IMR-90 (cell line): ENCODE measurements at regions of chr15 and their contacts with region 1.

Region 1: GRCh38 chr15:50145451-50145872 is 26.4 kb upstream of the ATP8B4 start:
- DNase-seq: peak; percentile 88
- ATAC-seq: peak; percentile 86
- H3K4me3 ChIP-seq: no peak overlapping the region
- H3K27ac ChIP-seq: peak overlapping the region; percentile 44
- H3K4me1 ChIP-seq: no peaks in the 10 kb centered on the region; the same call in 1 of the 2 replicates
- H3K27me3 ChIP-seq: no peaks in the 10 kb centered on the region
- CTCF ChIP-seq: peak; percentile 60
- POLR2A ChIP-seq: no peak
- RAD21 ChIP-seq: peak; percentile 83

Region 2: GRCh38 chr15:48645558-48646330 is 1499.7 kb before region 1 on chr15 and contains the start of gene FBN1:
- CTCF ChIA-PET with region 1: no interaction called
- POLR2A ChIA-PET with region 1: no interaction called
- dilution Hi-C with region 1: no loop called
- in situ Hi-C with region 1: no loop called
- intact Hi-C with region 1: loop called (anchors 10 kb)
- DNase-seq: peak; percentile 90
- ATAC-seq: peak; percentile 74
- H3K4me3 ChIP-seq: peak within 1 kb of the TSS; percentile 90
- H3K27ac ChIP-seq: peak within 1 kb of the TSS; percentile 89
- H3K4me1 ChIP-seq: peaks cover 6% of the 10 kb centered on the region
- H3K27me3 ChIP-seq: no peaks in the 10 kb centered on the region
- CTCF ChIP-seq: no peak
- POLR2A ChIP-seq: peak; percentile 96
- RAD21 ChIP-seq: peak; percentile 2; the same call in 1 of the 2 replicates
- total RNA-seq, gene FBN1: 283 and 326 TPM in 2 replicates

Region 3: DNA sequence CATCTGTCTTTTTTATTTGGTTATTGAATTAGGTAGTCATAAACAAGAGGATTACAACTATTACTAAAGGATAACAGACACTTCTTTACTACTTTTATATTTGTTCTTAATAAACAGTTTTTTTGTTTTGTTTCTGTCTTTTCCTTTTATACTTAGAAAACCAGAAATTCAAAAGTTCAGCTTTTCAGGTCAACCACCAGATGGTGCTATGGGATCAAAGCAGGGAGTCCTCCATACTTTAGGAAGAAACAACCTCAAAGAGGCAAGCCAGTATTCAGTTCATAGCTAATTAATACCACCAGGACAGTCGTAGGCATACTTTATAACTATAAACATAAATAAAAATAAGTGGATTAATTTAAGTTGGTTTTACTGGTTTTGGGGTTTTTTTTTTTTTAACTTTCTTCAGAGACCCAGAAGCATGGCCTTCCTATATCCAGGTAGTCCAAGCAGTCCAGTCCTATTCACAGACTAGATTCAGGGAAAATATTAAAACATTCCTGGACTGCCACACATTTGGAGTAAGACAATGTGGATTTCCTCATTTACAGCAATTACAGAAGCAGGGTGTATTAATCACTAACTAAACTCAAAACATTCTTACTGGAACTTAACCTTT is 1283.5 kb before region 1 on chr15:
- CTCF ChIA-PET with region 1: no interaction called
- POLR2A ChIA-PET with region 1: no interaction called
- dilution Hi-C with region 1: no loop called
- in situ Hi-C with region 1: loop called (anchors 10 kb)
- intact Hi-C with region 1: loop called (anchors 5 kb)
- DNase-seq: peak; percentile 82
- ATAC-seq: peak; percentile 28; the same call in 1 of the 2 replicates
- H3K4me3 ChIP-seq: no peak overlapping the region
- H3K27ac ChIP-seq: no peak overlapping the region
- H3K4me1 ChIP-seq: peaks cover 24% of the 10 kb centered on the region
- H3K27me3 ChIP-seq: no peaks in the 10 kb centered on the region
- CTCF ChIP-seq: peak; percentile 96
- POLR2A ChIP-seq: no peak
- RAD21 ChIP-seq: peak; percentile 99

Region 4: GRCh38 chr15:49242820-49243219 is 902.6 kb before region 1 on chr15:
- CTCF ChIA-PET with region 1: no interaction called
- POLR2A ChIA-PET with region 1: no interaction called
- dilution Hi-C with region 1: no loop called
- in situ Hi-C with region 1: loop called (anchors 5 kb)
- intact Hi-C with region 1: no loop called
- DNase-seq: peak; percentile 95
- ATAC-seq: peak; percentile 81
- H3K4me3 ChIP-seq: no peak overlapping the region
- H3K27ac ChIP-seq: peak overlapping the region; percentile 91
- H3K4me1 ChIP-seq: peaks cover 15% of the 10 kb centered on the region
- H3K27me3 ChIP-seq: no peaks in the 10 kb centered on the region
- CTCF ChIP-seq: no peak
- POLR2A ChIP-seq: no peak
- RAD21 ChIP-seq: no peak

Region 5: GRCh38 chr15:49927189-49927868 is 218.1 kb before region 1 on chr15:
- CTCF ChIA-PET with region 1: no interaction called
- POLR2A ChIA-PET with region 1: no interaction called
- dilution Hi-C with region 1: no loop called
- in situ Hi-C with region 1: no loop called
- intact Hi-C with region 1: no loop called
- DNase-seq: peak; percentile 62
- ATAC-seq: peak; percentile 51; the same call in 1 of the 2 replicates
- H3K4me3 ChIP-seq: no peak overlapping the region
- H3K27ac ChIP-seq: peak overlapping the region; percentile 53; the same call in 1 of the 2 replicates
- H3K4me1 ChIP-seq: peaks cover 4% of the 10 kb centered on the region
- H3K27me3 ChIP-seq: no peaks in the 10 kb centered on the region
- CTCF ChIP-seq: no peak
- POLR2A ChIP-seq: no peak
- RAD21 ChIP-seq: no peak

Region 6: GRCh38 chr15:50304836-50305539 is 159.5 kb after region 1 on chr15:
- CTCF ChIA-PET with region 1: no interaction called
- POLR2A ChIA-PET with region 1: no interaction called
- dilution Hi-C with region 1: no loop called
- in situ Hi-C with region 1: loop called (anchors 5 kb)
- intact Hi-C with region 1: no loop called
- DNase-seq: no peak
- ATAC-seq: no peak
- H3K4me3 ChIP-seq: no peak overlapping the region
- H3K27ac ChIP-seq: no peak overlapping the region
- H3K4me1 ChIP-seq: no peaks in the 10 kb centered on the region
- H3K27me3 ChIP-seq: no peaks in the 10 kb centered on the region
- CTCF ChIP-seq: no peak
- POLR2A ChIP-seq: no peak
- RAD21 ChIP-seq: no peak